Common myeloid progenitor, CD34-positive (primary cell): ENCODE measurements at regions of chr1 and their contacts with region 1.

Region 1: GRCh38 chr1:89987170-89987819 is 7.6 kb upstream of the ZNF326 start:
- DNase-seq: peak; percentile 77 to 89 (median 84)
- H3K4me3 ChIP-seq: no peak overlapping the region
- H3K27ac ChIP-seq: no peak overlapping the region
- H3K4me1 ChIP-seq: peaks cover 0 to 4% (median 0%) of the 10 kb centered on the region in 4 experiments
- H3K27me3 ChIP-seq: no peaks in the 10 kb centered on the region

Region 2: GRCh38 chr1:89780721-89781120 is 206.6 kb before region 1 on chr1:
- CTCF ChIA-PET with region 1: interaction called, 76 read pairs
- POLR2A ChIA-PET with region 1: no interaction called
- DNase-seq: peak; percentile 68 to 83 (median 83)
- H3K4me3 ChIP-seq: no peak overlapping the region
- H3K27ac ChIP-seq: no peak overlapping the region
- H3K4me1 ChIP-seq: peaks cover 0 to 10% (median 5%) of the 10 kb centered on the region in 4 experiments
- H3K27me3 ChIP-seq: no peaks in the 10 kb centered on the region

Region 3: GRCh38 chr1:89935235-89935634 is 52.1 kb before region 1 on chr1:
- CTCF ChIA-PET with region 1: no interaction called
- POLR2A ChIA-PET with region 1: no interaction called
- DNase-seq: no peak
- H3K4me3 ChIP-seq: no peak overlapping the region
- H3K27ac ChIP-seq: no peak overlapping the region
- H3K4me1 ChIP-seq: peaks cover 0 to 14% (median 6%) of the 10 kb centered on the region in 4 experiments
- H3K27me3 ChIP-seq: no peaks in the 10 kb centered on the region

Region 4: DNA sequence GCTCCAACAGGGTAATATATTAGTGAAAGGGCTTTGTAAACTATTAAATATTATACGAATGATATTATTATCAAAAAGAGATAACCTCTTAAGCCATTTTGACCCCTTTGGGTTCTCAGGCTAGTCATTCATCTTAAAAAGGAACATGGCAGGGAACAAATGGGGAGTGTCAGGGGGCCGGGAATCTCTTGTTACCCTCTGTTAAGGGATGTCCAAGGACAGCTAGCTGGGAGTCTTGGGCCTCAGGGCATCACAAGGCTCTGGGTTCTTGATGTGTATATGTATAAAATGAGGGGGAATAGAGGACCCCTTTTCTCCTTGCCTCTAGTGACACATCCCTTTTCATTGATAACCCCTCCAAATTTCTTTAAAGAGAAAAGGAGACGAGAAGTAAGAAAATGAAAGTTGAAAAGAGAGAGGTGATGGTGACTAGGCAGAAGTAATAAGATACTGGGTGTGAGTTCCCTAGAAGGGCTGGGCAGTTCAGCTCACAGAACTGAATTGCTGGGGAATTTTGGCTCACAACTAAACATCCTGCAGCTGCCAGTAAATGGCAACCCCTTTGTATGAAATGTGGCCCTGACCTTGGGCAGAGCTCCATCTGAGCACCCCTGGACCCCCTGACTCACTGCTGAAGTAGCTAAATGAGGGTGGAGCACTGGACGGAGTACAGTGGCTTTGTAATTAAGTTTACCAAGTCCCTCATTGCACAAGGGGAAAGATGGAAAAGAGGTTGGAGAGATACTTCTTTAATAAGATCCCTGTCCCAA is 12.4 kb before region 1 on chr1:
- CTCF ChIA-PET with region 1: interaction called, 20 read pairs
- POLR2A ChIA-PET with region 1: no interaction called
- DNase-seq: peak in 2 of 3 donors; percentile 39 to 47
- H3K4me3 ChIP-seq: no peak overlapping the region
- H3K27ac ChIP-seq: peak overlapping the region in 1 of 2 experiments; percentile 45
- H3K4me1 ChIP-seq: peaks cover 7 to 26% (median 22%) of the 10 kb centered on the region in 4 experiments
- H3K27me3 ChIP-seq: no peaks in the 10 kb centered on the region

Region 5: DNA sequence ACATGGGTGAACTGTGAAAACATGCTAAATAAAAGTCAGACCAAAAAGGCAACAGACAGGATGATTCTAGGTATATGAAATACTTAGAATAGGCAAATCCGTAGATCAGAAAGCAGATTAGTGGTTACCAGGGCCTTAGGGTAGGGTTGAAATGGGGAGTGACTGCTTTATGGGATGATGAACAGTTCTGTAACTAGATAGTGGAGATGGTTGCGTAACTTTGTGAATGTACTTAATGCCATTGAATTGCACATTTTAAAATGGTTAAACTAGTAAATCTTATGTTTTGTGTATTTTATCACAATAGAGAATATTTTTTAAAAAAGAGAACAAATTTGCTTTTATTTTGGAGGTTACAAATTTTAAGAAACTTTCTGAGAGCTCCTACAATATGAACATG is 25.0 kb after region 1 on chr1:
- CTCF ChIA-PET with region 1: no interaction called
- POLR2A ChIA-PET with region 1: no interaction called
- DNase-seq: no peak
- H3K4me3 ChIP-seq: no peak overlapping the region
- H3K27ac ChIP-seq: no peak overlapping the region
- H3K4me1 ChIP-seq: no peaks in the 10 kb centered on the region
- H3K27me3 ChIP-seq: no peaks in the 10 kb centered on the region